ENCODE measurements at regions of chr2 and their contacts with region 1.

Region 1: GRCh38 chr2:38722271-38723061 is 28.7 kb downstream of the SRSF7 start:
- DNase-seq: peak in 1 of 2 donors; percentile 57
- ATAC-seq: peak in 2 of 3 donors; percentile 52
- H3K4me3 ChIP-seq: no peak overlapping the region
- H3K4me3 Mint-ChIP-seq: no peak overlapping the region
- H3K27ac ChIP-seq: peak overlapping the region; percentile 54
- H3K27ac Mint-ChIP-seq: peak overlapping the region in 1 of 2 donors; percentile 79
- H3K4me1 ChIP-seq: peaks cover 10% of the 10 kb centered on the region
- H3K4me1 Mint-ChIP-seq: peaks cover 14 to 16% of the 10 kb centered on the region in 2 donors
- H3K27me3 ChIP-seq: no peaks in the 10 kb centered on the region
- H3K27me3 Mint-ChIP-seq: no peaks in the 10 kb centered on the region
- CTCF ChIP-seq: no peak

Region 2: GRCh38 chr2:38581193-38582147 is 141.0 kb before region 1 on chr2:
- intact Hi-C with region 1: loop called (anchors 1 kb)
- DNase-seq: peak in 1 of 2 donors; percentile 88
- ATAC-seq: peak; percentile 78 to 87 (median 80)
- H3K4me3 ChIP-seq: no peak overlapping the region
- H3K4me3 Mint-ChIP-seq: no peak overlapping the region
- H3K27ac ChIP-seq: no peak overlapping the region
- H3K27ac Mint-ChIP-seq: no peak overlapping the region
- H3K4me1 ChIP-seq: no peaks in the 10 kb centered on the region
- H3K4me1 Mint-ChIP-seq: no peaks in the 10 kb centered on the region
- H3K27me3 ChIP-seq: no peaks in the 10 kb centered on the region
- H3K27me3 Mint-ChIP-seq: no peaks in the 10 kb centered on the region
- CTCF ChIP-seq: peak; percentile 78

Region 3: GRCh38 chr2:38602732-38603401 is 119.6 kb before region 1 on chr2 and contains the start of gene HNRNPLL:
- intact Hi-C with region 1: loop called (anchors 1 kb)
- DNase-seq: peak; percentile 77 to 93
- ATAC-seq: peak; percentile 75 to 85 (median 77)
- H3K4me3 ChIP-seq: peak within 1 kb of the TSS; percentile 85
- H3K4me3 Mint-ChIP-seq: peak within 1 kb of the TSS; percentile 90
- H3K27ac ChIP-seq: peak within 1 kb of the TSS; percentile 64
- H3K27ac Mint-ChIP-seq: peak within 1 kb of the TSS; percentile 75 to 77
- H3K4me1 ChIP-seq: peaks cover 16% of the 10 kb centered on the region
- H3K4me1 Mint-ChIP-seq: peaks cover 13 to 23% of the 10 kb centered on the region in 2 donors
- H3K27me3 ChIP-seq: peaks cover 2% of the 10 kb centered on the region
- H3K27me3 Mint-ChIP-seq: peaks cover 14 to 16% of the 10 kb centered on the region in 2 donors
- CTCF ChIP-seq: no peak
- total RNA-seq, gene HNRNPLL: 7.3 to 18.4 (median 8.8) TPM

Measured in natural killer cell (primary cell).